Astrocyte of the cerebellum (primary cell): ENCODE measurements at regions of chr16 and their contacts with region 1.

Region 1: GRCh38 chr16:55444754-55445485 is 34.1 kb upstream of the MMP2 start:
- DNase-seq: no peak
- H3K4me3 ChIP-seq: no peak overlapping the region
- CTCF ChIP-seq: no peak

Region 2: DNA sequence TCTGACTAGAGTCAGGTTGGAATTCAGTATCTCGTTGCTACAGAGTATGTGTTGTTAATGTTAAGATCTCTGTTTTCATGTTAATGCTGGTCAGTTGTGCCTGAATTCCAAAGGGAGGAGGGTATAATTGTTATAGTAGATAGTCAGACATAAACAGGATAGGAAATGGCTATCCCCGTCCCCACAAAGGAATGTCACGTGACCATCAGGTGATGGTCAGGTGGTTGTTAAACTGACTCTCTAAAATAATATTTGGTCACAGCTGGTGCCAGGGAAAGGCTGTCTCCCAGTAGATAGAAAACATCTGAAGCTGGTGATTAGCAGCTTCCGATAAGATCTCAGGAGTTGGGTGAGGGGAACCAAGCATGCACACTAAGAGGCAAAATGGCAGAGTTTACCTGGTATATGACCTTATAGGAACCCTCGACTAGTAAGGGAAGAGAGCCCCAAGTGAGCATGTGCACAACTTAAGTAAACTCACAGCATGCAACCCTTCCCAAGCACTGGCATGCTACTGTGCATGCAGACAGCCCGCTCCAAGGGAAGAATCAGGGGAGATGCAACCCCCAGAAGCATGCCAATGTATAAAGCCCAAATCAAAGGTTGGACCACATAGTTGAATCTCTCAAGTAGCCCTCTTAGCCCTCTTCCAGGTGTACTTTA is 183.5 kb after region 1 on chr16:
- in situ Hi-C with region 1: loop called (anchors 5 kb)
- DNase-seq: no peak
- H3K4me3 ChIP-seq: no peak overlapping the region
- CTCF ChIP-seq: no peak

Region 3: GRCh38 chr16:55735120-55735781 is 290.3 kb after region 1 on chr16:
- in situ Hi-C with region 1: loop called (anchors 25 kb)
- DNase-seq: no peak
- H3K4me3 ChIP-seq: no peak overlapping the region
- CTCF ChIP-seq: no peak